ENCODE measurements at regions of chr11 and their contacts with region 1.

Region 1: DNA sequence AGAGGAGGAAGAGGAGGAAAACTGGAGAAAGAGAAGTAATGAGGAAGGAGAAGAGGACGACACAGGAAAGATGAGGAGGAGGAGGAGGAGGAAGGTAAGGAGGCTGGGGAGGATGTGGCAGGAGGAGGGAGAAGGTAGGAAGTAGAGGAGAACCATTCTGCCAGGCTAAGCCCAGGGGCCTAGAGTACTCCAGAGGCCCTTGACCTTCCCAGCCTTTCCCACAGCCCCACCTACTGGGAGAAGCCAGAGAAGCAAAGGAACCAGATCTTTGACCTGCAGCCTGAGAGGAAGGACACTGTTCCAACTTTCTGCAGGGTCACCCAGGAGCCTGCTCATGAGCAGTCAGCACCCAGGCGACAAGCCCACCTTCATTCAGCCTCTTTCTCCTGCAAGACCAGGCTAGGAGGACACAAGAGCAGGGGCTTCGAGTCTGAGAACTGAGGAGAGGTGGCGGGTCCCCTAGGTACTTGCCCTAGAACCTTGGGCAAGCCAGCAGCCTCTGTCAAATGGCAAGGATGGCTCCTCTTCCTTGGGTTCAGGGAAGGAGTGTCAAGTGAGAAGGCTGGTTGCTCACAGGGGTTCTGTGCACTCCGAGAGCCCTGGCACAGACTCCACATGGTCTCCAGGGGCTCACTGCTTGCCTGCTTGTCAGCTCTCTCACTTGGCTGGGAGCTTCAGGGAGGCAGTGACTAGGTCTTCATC is 27.9 kb upstream of the OAF start:
- DNase-seq: no peak
- H3K4me3 ChIP-seq: no peak overlapping the region
- H3K27ac ChIP-seq: no peak overlapping the region
- H3K4me1 ChIP-seq: no peaks in the 10 kb centered on the region
- H3K27me3 ChIP-seq: no peaks in the 10 kb centered on the region
- CTCF ChIP-seq: peak; percentile 22 to 34
- POLR2A ChIP-seq: no peak

Region 2: GRCh38 chr11:120229451-120230424 is 46.8 kb after region 1 on chr11:
- CTCF ChIA-PET with region 1: interaction called, 71 read pairs
- POLR2A ChIA-PET with region 1: no interaction called
- dilution Hi-C with region 1: no loop called
- intact Hi-C with region 1: no loop called
- DNase-seq: peak; percentile 48
- H3K4me3 ChIP-seq: no peak overlapping the region
- H3K27ac ChIP-seq: no peak overlapping the region
- H3K4me1 ChIP-seq: peaks cover 11% of the 10 kb centered on the region
- H3K27me3 ChIP-seq: peaks cover 1 to 7% of the 10 kb centered on the region in 2 experiments
- CTCF ChIP-seq: peak; percentile 49 to 63
- POLR2A ChIP-seq: no peak

Region 3: GRCh38 chr11:120248551-120249278 is 65.8 kb after region 1 on chr11:
- CTCF ChIA-PET with region 1: no interaction called
- POLR2A ChIA-PET with region 1: no interaction called
- dilution Hi-C with region 1: no loop called
- intact Hi-C with region 1: no loop called
- DNase-seq: no peak
- H3K4me3 ChIP-seq: no peak overlapping the region
- H3K27ac ChIP-seq: no peak overlapping the region
- H3K4me1 ChIP-seq: peaks cover 4% of the 10 kb centered on the region
- H3K27me3 ChIP-seq: peaks cover 26 to 37% of the 10 kb centered on the region in 2 experiments
- CTCF ChIP-seq: no peak
- POLR2A ChIP-seq: no peak

Measured in endothelial cell of umbilical vein (primary cell).